ENCODE measurements at regions of chr3 and their contacts with region 1.

Region 1: DNA sequence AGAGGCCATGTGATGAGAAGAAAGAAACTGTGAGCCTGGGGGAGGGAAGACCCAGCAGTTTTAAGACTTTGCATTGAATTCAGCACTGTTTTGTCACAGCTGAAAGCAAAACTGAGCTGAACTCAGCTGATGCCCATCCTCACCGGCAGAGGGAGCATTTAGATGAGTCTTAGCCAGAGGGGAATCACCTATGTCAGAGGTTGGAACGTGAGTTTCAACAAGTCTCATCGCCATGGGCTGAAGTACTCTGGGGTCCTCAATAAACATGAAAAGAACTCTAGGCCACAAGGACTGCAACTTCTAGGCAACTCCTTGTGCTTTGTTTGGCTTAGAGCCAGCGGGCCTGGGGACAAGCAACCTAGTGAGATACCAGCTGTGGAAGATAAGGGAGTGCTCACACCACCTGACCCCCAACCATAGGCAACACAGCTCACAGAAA is 324.5 kb downstream of the TBL1XR1 start:
- H3K4me3 Mint-ChIP-seq: no peak overlapping the region
- H3K27ac Mint-ChIP-seq: no peak overlapping the region
- H3K4me1 Mint-ChIP-seq: peaks cover 10% of the 10 kb centered on the region
- H3K27me3 Mint-ChIP-seq: no peaks in the 10 kb centered on the region

Region 2: DNA sequence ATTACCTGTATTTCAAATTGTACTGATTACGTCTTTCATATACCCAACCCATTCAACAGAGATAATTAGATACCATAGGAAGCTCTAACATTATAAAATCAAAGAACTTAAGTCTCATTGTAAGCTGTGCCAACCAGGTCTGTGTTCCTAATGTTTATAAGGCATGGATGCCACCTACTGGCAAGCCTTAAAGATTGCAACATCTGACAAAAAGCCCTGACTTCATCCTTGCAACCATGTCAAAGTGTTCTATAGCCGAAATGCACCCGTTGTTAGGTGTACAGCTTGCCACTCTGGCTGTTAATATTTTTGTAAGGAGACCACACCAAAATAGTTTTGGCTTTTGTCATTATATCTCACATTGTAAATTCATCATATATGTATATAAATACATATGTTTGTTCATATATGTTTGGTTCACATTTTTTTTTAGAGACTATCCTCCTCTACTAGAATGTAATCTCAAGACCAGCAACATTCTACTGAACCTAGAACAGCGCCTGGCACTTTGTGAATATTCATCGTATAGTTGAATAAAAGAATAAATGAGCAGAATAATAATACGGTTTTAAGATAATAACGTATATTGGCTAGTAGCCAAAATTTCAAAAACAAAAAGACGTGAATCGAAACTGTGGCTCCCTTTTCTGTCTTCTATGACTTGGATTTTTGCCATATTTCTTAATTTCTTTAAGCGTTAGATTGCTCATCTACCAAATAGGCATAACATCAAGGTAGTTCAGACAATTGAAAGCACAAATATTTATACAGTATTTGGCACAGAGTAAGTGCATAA is 66.4 kb after region 1 on chr3:
- intact Hi-C with region 1: loop called (anchors 2 kb)
- H3K4me3 Mint-ChIP-seq: no peak overlapping the region
- H3K27ac Mint-ChIP-seq: no peak overlapping the region
- H3K4me1 Mint-ChIP-seq: no peaks in the 10 kb centered on the region
- H3K27me3 Mint-ChIP-seq: no peaks in the 10 kb centered on the region

Region 3: DNA sequence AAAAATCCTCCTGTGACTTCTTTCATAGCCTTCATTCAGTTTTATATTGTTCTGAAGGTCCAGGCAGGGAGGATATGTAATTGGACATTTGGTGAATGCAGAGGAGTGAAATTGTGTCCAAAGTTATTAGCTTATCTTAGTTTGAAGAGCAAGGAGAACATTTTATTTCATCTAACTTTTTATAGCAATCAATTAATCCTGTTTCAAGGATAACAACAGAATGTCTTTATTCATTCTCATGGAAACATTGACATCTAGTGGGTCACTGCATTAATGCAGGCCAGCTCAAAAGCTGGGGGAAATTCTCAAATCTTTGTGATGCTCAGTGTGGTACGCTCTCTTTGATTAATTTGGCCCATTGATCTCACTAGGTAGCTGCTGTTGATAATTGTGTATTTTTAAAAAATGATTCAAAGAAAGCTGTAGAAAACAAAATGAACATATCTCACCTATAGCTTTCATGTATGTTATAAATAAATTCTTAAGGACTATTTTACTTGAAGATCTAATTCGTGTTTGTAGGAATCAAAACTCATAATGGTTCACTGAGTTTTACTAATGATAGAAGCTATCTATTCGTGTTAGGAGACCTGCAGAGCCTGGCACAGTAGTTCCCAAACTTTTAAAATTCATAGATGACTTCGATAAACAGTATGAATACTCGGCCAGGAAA is 1512.6 kb after region 1 on chr3:
- intact Hi-C with region 1: loop called (anchors 10 kb)
- H3K4me3 Mint-ChIP-seq: no peak overlapping the region
- H3K27ac Mint-ChIP-seq: no peak overlapping the region
- H3K4me1 Mint-ChIP-seq: no peaks in the 10 kb centered on the region
- H3K27me3 Mint-ChIP-seq: no peaks in the 10 kb centered on the region